ENCODE measurements at regions of chr11 and their contacts with region 1.

Region 1: DNA sequence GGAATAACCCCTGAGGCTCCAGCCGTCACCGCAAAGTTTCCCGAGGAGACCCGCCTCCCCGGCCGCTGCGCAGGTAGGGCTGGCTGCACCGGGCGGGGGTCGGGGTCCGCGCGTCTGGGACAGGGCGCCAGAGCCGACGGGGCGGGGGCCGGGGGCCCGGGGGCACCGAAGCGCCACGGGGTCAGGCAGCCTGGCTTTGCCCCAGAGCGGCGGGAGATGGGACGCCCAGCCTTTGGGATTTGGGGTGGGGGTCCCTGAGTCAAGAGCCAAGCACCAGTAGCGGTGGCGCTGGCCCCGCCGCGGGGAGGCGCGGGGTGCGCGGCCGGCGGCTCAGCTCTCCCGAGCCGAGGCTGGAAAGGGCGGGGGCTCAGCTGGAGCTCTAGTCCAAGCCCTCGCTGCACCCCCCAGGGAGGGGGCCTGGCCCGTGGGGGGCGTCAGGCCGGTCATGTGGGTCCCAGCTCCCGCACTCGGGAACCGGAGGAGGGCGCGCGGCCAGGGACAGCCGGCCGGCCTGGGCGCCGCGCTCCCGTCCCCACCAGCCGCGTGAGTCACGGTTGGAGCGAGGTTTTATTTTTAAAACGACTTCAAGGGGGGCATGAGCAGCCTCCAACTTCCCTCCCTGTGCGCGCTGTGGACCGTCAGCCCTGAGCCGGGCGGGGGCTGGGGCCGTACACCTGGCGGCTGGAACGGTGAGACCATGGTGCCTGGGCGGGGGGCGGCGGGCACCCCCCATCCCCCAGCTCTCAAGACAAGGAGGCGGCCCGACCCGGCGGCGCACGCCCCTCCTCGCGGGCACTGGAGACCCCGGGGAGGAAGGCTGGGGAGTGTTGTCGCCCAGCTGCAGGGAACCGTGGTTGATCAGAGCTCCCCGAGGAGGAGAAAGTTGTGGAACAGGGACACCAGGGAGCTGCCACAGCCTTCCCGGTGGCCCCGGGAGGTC is 626 bp downstream of the FLRT1 start:
- DNase-seq: peak; percentile 67
- H3K4me3 ChIP-seq: peak overlapping the region; percentile 60
- H3K27ac ChIP-seq: peak overlapping the region; percentile 47
- H3K4me1 ChIP-seq: peaks cover 24% of the 10 kb centered on the region
- H3K27me3 ChIP-seq: peaks cover 14% of the 10 kb centered on the region
- CTCF ChIP-seq: no peak

Region 2: DNA sequence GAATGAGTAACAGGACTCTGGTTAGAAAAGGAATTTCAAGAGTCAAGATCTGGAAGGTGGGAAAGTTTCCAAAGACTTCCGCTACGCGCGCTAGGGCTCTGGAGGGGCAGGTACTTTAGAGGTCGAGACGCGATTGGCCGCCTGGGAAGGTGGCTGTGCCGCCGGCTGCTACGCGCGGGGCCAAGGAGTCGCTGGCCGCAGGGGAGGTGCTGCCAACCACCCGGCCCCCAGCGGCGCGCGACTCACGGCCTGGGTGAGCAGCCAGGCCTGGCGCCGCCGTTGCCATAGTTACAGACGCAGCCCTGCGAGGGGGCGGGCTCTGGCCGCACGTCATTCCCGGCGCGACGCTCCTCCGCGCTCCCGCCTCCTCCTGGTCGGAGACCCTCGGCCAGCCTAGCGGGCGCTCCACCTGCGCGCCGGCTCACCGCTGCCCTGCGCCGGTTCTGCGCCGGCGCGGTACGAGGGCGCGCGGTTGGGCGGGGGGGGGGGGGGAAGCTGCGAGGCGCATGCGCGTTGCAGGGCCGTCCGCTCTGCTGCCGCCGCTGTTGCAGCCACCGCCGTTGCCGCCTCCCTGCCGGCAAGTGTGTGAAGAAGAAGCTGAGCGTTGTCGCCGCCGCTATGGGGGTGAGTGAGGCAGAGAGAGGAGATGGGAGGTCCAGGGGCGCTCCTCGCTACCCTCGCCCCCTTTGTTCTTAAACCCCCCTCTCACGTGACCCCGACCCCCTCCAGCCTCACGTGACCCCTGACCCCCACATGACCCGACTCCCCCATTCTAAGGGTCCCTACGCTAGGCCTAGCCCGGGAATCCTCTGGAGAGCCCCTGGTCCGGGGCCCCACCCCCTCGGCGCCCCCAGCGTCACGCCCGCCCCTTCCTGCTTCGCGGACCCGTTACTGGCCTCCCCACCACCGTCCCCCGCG is 97.6 kb before region 1 on chr11 and contains the start of gene NAA40:
- CTCF ChIA-PET with region 1: no interaction called
- POLR2A ChIA-PET with region 1: no interaction called
- intact Hi-C with region 1: no loop called
- DNase-seq: peak; percentile 97
- H3K4me3 ChIP-seq: peak within 1 kb of the TSS; percentile 97
- H3K27ac ChIP-seq: peak within 1 kb of the TSS; percentile 85
- H3K4me1 ChIP-seq: peaks cover 7% of the 10 kb centered on the region
- H3K27me3 ChIP-seq: no peaks in the 10 kb centered on the region
- CTCF ChIP-seq: no peak
- total RNA-seq, gene NAA40: 44.8 and 51.2 TPM in 2 replicates

Region 3: DNA sequence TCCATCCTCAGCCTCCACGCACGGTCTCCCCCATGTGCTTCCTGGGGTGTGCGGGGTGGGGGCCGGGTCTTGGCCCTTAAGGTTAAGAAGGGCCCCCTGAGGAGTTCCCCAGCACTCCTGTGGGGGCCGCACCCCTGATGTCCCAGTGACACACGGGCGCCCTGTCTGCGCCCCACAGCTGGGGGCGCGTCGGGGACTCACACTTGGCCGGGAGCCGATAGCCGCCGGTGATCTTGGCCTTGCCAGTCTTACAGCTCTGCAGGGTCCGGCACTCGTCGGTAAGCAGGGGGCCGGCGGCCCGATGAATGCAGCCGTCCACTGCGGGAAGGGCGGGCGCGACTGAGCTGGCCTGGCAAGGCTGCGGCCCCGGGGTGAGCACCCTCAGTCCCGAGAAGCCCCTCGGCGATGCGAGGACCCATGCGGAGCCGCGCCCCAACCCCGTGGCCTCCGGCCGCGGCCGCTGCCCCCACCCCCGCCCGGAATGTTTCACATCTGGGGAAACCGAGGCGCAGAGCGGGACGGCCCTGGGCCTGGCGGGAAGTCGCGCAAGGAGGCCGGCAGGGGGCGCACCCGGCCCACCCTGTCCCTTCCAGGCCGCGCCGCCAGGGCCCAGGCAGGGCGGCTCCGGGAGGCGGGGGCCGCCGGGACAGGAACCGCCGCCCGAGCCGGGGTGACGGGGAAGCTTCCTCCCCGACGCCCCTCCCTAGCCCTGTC is 36.2 kb before region 1 on chr11:
- CTCF ChIA-PET with region 1: interaction called, 12 read pairs
- POLR2A ChIA-PET with region 1: no interaction called
- intact Hi-C with region 1: no loop called
- DNase-seq: peak; percentile 91
- H3K4me3 ChIP-seq: peak overlapping the region; percentile 41
- H3K27ac ChIP-seq: no peak overlapping the region
- H3K4me1 ChIP-seq: peaks cover 50% of the 10 kb centered on the region
- H3K27me3 ChIP-seq: no peaks in the 10 kb centered on the region
- CTCF ChIP-seq: peak; percentile 75

Region 4: DNA sequence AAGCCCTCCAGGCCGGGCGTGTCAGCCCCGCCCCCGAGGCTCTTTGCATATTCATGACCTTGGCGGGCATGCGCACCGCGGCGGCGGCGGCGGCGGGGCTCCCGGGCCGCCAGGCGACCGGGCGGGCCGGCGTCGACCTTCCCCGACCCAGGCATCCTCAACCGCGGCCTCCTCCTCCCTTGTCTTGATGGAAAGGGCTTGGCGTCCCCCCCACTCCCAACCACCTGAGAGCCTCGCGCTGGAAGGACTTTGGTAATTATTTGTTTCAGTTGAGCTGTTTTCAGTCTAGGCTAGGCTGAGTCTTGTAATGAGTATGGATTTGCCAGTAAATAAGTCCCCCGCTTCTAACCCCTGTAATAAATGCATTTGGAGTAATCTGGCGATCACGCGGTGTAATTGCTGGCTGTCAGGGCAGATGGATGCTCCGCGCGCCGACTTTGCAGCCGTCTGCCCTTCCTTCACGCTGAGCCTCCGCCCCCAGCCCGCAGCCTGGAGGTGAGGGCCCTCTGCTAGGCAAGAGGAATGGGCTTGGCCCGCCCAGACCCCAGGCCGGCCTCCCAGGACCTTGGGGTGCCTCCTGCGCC is 24.6 kb after region 1 on chr11:
- CTCF ChIA-PET with region 1: interaction called, 10 read pairs
- POLR2A ChIA-PET with region 1: no interaction called
- intact Hi-C with region 1: no loop called
- DNase-seq: peak; percentile 65
- H3K4me3 ChIP-seq: peak overlapping the region; percentile 46
- H3K27ac ChIP-seq: no peak overlapping the region
- H3K4me1 ChIP-seq: peaks cover 21% of the 10 kb centered on the region
- H3K27me3 ChIP-seq: no peaks in the 10 kb centered on the region
- CTCF ChIP-seq: no peak